GM12878 (cell line): ENCODE measurements at regions of chr19 and their contacts with region 1.

Region 1: GRCh38 chr19:43765109-43765876 is 10.5 kb upstream of the SMG9 start:
- DNase-seq: peak; percentile 95
- ATAC-seq: peak; percentile 81
- H3K4me3 ChIP-seq: peak overlapping the region; percentile 14; the same call in 1 of the 2 replicates
- H3K27ac ChIP-seq: peak overlapping the region; percentile 100
- H3K4me1 ChIP-seq: peaks cover 57% of the 10 kb centered on the region
- H3K27me3 ChIP-seq: no peaks in the 10 kb centered on the region
- CTCF ChIP-seq: no peak
- EP300 ChIP-seq: peak; percentile 96 to 99
- POLR2A ChIP-seq: peak; percentile 62
- RAD21 ChIP-seq: no peak

Region 2: DNA sequence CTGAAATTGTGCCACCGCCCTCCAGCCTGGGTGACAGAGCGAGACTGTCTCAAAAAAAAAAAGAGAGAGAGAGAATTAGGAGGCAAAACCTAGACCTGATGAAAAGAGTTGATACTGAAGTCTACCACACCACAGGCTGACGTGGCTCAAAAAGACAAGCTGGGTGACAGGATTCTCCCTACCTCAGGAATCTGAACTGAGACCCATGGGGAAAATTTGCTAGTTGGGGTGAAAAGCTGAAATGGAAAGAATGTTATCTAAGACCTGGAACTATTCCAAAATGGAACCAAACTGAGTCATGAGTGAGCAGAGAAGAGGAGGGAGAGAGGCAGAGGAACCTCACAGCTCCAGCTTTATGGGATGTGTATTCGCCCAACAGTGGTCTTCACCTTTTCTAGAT is 22.3 kb before region 1 on chr19:
- CTCF ChIA-PET with region 1: interaction called, 136 read pairs
- POLR2A ChIA-PET with region 1: interaction called, 307 read pairs
- RAD21 ChIA-PET with region 1: interaction called, 66 read pairs
- SMC1A ChIA-PET with region 1: interaction called, 186 read pairs
- in situ Hi-C with region 1: no loop called
- intact Hi-C with region 1: loop called (anchors 2 kb)
- DNase-seq: no peak
- ATAC-seq: no peak
- H3K4me3 ChIP-seq: no peak overlapping the region
- H3K27ac ChIP-seq: no peak overlapping the region
- H3K4me1 ChIP-seq: peaks cover 19% of the 10 kb centered on the region
- H3K27me3 ChIP-seq: no peaks in the 10 kb centered on the region
- CTCF ChIP-seq: no peak
- EP300 ChIP-seq: no peak
- POLR2A ChIP-seq: no peak
- RAD21 ChIP-seq: no peak

Region 3: GRCh38 chr19:43749152-43749907 is 16.0 kb before region 1 on chr19:
- CTCF ChIA-PET with region 1: interaction called, 161 read pairs
- POLR2A ChIA-PET with region 1: interaction called, 307 read pairs
- RAD21 ChIA-PET with region 1: interaction called, 167 read pairs
- SMC1A ChIA-PET with region 1: interaction called, 186 read pairs
- in situ Hi-C with region 1: no loop called
- intact Hi-C with region 1: loop called (anchors 1 kb)
- DNase-seq: no peak
- ATAC-seq: no peak
- H3K4me3 ChIP-seq: 0 out of 2 replicates have a peak overlapping the region, but pooled peaks have one; percentile 18
- H3K27ac ChIP-seq: peak overlapping the region; percentile 87
- H3K4me1 ChIP-seq: peaks cover 49% of the 10 kb centered on the region
- H3K27me3 ChIP-seq: no peaks in the 10 kb centered on the region
- CTCF ChIP-seq: no peak
- EP300 ChIP-seq: no peak
- POLR2A ChIP-seq: no peak
- RAD21 ChIP-seq: no peak

Region 4: GRCh38 chr19:43777163-43777700 is 11.9 kb after region 1 on chr19:
- CTCF ChIA-PET with region 1: interaction called, 324 read pairs
- POLR2A ChIA-PET with region 1: interaction called, 389 read pairs
- RAD21 ChIA-PET with region 1: interaction called, 148 read pairs
- SMC1A ChIA-PET with region 1: interaction called, 325 read pairs
- in situ Hi-C with region 1: no loop called
- intact Hi-C with region 1: loop called (anchors 1 kb)
- DNase-seq: no peak
- ATAC-seq: peak; percentile 29
- H3K4me3 ChIP-seq: peak overlapping the region; percentile 100
- H3K27ac ChIP-seq: peak overlapping the region; percentile 95
- H3K4me1 ChIP-seq: peaks cover 43% of the 10 kb centered on the region
- H3K27me3 ChIP-seq: no peaks in the 10 kb centered on the region
- CTCF ChIP-seq: no peak
- EP300 ChIP-seq: no peak
- POLR2A ChIP-seq: no peak
- RAD21 ChIP-seq: no peak

Region 5: DNA sequence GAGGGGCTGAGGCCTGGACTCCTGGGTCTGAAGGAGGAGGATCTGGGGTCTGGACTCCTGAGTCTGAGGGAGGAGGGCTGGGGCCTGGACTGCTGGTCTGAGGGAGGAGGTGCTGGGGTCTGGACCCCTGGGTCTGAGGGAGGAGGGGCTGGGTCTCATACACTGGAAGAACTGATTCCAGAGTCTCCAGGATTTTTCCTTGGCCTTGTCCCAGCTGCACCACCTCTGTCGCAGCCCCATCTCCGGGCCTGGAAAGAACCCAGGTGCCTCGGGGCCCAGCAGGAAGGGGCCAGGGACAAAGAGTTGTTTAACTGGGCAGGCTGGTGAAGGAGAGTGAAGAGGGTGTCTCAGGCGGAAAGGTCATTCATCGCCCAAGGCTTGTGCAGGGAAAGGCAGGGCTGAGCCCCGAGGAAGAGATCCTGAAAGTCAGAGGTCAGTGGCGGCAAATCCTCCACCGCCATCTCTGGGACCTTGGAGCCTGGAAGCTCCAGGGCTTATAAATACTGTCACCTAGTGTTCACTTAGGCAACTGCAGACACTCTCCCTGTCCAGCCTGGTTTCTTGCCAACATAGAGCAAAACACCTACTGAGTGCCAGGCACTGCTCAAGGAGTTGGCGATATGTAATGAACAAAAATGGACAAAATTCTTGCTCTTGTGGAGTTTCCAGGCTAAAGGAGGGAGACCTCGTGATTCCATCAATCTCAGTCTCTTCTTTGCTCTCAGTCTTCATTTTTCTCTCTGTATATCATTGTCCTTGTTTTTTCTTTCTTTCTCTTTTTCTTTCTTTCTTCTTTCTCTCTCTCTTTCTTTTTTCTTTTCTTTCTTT is 19.9 kb after region 1 on chr19:
- CTCF ChIA-PET with region 1: interaction called, 324 read pairs
- POLR2A ChIA-PET with region 1: interaction called, 389 read pairs
- RAD21 ChIA-PET with region 1: interaction called, 148 read pairs
- SMC1A ChIA-PET with region 1: interaction called, 325 read pairs
- in situ Hi-C with region 1: no loop called
- intact Hi-C with region 1: no loop called
- DNase-seq: no peak
- ATAC-seq: peak; percentile 70
- H3K4me3 ChIP-seq: no peak overlapping the region
- H3K27ac ChIP-seq: peak overlapping the region; percentile 74
- H3K4me1 ChIP-seq: peaks cover 49% of the 10 kb centered on the region
- H3K27me3 ChIP-seq: no peaks in the 10 kb centered on the region
- CTCF ChIP-seq: peak; percentile 98 to 100 (median 100); a peak in 5 of 6 replicates
- EP300 ChIP-seq: no peak
- POLR2A ChIP-seq: no peak
- RAD21 ChIP-seq: peak; percentile 95

Region 6: DNA sequence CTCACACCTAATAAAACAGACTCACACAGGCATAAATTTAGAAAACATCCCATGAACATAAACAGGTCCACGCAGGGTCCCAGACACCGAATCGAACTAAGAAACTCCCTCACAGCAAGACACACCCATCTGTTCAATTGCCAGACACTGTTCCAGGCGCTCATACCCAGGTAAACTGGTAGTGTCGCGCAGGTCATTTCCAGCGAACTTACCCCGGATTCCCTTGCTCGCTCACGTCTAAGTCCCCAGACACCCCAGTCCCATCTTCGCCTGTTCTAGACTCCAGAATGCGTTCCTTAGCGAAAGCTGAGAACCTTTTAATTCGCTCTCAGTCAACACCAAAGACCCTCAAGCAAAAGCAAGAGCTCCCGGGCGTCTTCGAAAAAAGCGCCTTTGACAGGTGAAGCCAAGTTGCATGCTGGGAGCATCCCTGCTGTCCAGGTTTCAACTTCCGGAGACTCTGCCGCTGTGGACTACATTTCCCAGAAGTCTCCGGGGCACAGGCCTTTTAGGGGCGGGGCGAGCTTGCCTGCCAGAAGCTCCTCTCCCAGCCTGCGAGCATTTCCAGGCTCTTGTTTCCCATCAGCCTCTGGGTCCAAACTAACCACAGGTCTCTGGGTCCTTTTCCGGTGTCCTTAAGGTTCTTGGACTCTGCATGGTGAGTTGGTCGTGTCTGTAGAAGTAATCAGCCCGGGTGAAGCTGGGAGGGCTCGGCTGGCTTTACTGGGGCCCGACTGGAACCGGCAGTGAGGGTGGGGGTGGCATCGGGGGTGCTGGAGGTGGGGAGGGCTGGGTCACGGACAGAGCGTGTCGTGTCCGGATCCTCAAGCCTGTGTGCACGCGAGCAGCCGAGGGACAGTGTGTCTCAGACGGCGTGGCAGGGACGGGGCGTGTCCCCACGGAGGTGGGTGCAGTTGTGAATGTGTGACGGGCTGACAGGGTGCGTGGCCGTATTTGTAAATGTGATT is 61.8 kb after region 1 on chr19 and contains the start of gene ZNF283:
- CTCF ChIA-PET with region 1: no interaction called
- POLR2A ChIA-PET with region 1: no interaction called
- RAD21 ChIA-PET with region 1: no interaction called
- SMC1A ChIA-PET with region 1: no interaction called
- in situ Hi-C with region 1: no loop called
- intact Hi-C with region 1: no loop called
- DNase-seq: peak; percentile 28
- ATAC-seq: peak; percentile 98
- H3K4me3 ChIP-seq: peak within 1 kb of the TSS; percentile 73
- H3K27ac ChIP-seq: peak within 1 kb of the TSS; percentile 29; the same call in 1 of the 2 replicates
- H3K4me1 ChIP-seq: peaks cover 3% of the 10 kb centered on the region
- H3K27me3 ChIP-seq: no peaks in the 10 kb centered on the region
- CTCF ChIP-seq: no peak
- EP300 ChIP-seq: no peak
- POLR2A ChIP-seq: peak; percentile 27; the same call in 1 of the 2 replicates
- RAD21 ChIP-seq: no peak
- polyA plus RNA-seq, gene ZNF283: 2.2 to 2.4 TPM